ENCODE measurements at regions of chr12 and their contacts with region 1.

Region 1: DNA sequence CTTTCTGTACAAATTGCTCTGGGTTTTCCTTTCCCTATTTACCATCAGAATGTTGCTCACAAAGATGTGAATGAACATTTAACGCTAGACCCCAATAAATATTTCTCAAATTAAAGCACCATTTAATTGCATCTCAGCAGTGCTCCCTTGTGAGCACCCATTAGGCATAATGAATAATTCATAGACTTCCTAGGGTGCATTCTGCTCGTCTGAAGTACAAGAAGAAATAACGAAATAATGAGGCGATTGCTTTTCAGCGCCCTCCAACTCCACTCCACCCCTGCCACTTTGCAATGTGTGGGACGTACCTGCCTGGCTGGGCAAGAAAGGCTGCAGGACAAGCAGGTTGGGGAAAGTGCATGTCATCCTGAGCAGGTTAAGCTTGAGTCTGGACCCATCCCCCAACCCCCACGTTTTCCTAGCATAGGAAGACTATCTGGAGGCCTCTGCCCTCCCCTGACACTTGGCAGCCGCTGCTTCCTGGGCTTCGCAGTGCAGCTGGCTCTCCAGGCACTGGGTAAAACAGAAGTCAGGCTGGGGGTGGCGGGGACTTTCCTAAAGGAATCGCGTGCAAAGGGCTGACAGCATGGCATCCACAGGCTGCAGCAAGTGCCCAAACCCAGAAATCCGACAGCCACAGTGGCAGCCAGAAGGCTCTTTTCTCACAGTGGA is 253.7 kb downstream of the DUSP6 start:
- DNase-seq: peak; percentile 94
- H3K4me3 ChIP-seq: peak overlapping the region; percentile 26
- H3K27ac ChIP-seq: peak overlapping the region; percentile 60
- H3K4me1 ChIP-seq: peaks cover 45% of the 10 kb centered on the region
- H3K27me3 ChIP-seq: no peaks in the 10 kb centered on the region
- CTCF ChIP-seq: no peak

Region 2: GRCh38 chr12:89140602-89141238 is 42.1 kb after region 1 on chr12:
- CTCF ChIA-PET with region 1: no interaction called
- POLR2A ChIA-PET with region 1: no interaction called
- intact Hi-C with region 1: loop called (anchors 5 kb)
- DNase-seq: no peak
- H3K4me3 ChIP-seq: no peak overlapping the region
- H3K27ac ChIP-seq: no peak overlapping the region
- H3K4me1 ChIP-seq: peaks cover 46% of the 10 kb centered on the region
- H3K27me3 ChIP-seq: no peaks in the 10 kb centered on the region
- CTCF ChIP-seq: no peak